CD4-positive, alpha-beta T cell (primary cell): ENCODE measurements at regions of chr2 and their contacts with region 1.

Region 1: GRCh38 chr2:73828818-73829570 is at the start of gene STAMBP:
- DNase-seq: peak; percentile 78 to 97 (median 88)
- ATAC-seq: peak; percentile 90
- H3K4me3 ChIP-seq: peak within 1 kb of the TSS; percentile 83
- H3K4me3 Mint-ChIP-seq: peak within 1 kb of the TSS; percentile 98
- H3K27ac ChIP-seq: peak within 1 kb of the TSS; percentile 90 to 97
- H3K27ac Mint-ChIP-seq: peak within 1 kb of the TSS; percentile 95
- H3K4me1 ChIP-seq: peaks cover 25% of the 10 kb centered on the region
- H3K4me1 Mint-ChIP-seq: peaks cover 60% of the 10 kb centered on the region
- H3K27me3 ChIP-seq: no peaks in the 10 kb centered on the region
- H3K27me3 Mint-ChIP-seq: no peaks in the 10 kb centered on the region
- CTCF ChIP-seq: no peak
- total RNA-seq, gene STAMBP: 11.3 to 13.8 TPM

Region 2: DNA sequence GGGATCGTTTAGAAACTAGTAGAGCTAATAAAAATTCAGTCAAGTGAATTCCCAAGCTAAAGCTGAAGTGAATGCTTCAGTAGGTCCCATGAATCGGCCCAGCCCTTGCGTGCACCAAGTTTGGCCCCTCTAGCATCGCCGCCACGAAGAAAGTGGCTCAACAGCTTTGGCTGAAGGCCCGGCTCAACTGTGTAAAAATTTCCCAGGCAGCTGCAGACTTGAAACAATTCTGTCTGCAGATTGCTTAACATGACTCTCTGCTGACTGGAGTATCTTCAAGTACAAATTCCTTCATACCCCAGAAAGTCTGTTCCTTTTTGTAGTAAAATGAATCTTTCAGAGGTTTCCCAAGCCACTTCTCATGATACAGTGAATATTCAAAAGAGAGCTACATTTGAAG is 410.7 kb before region 1 on chr2:
- CTCF ChIA-PET with region 1: no interaction called
- POLR2A ChIA-PET with region 1: no interaction called
- intact Hi-C with region 1: no loop called
- DNase-seq: no peak
- ATAC-seq: no peak
- H3K4me3 ChIP-seq: no peak overlapping the region
- H3K4me3 Mint-ChIP-seq: no peak overlapping the region
- H3K27ac ChIP-seq: no peak overlapping the region
- H3K27ac Mint-ChIP-seq: no peak overlapping the region
- H3K4me1 ChIP-seq: no peaks in the 10 kb centered on the region
- H3K4me1 Mint-ChIP-seq: peaks cover 14% of the 10 kb centered on the region
- H3K27me3 ChIP-seq: no peaks in the 10 kb centered on the region
- H3K27me3 Mint-ChIP-seq: no peaks in the 10 kb centered on the region
- CTCF ChIP-seq: no peak

Region 3: GRCh38 chr2:73468376-73468775 is 360.6 kb before region 1 on chr2:
- CTCF ChIA-PET with region 1: no interaction called
- POLR2A ChIA-PET with region 1: no interaction called
- intact Hi-C with region 1: no loop called
- DNase-seq: no peak
- ATAC-seq: no peak
- H3K4me3 ChIP-seq: no peak overlapping the region
- H3K4me3 Mint-ChIP-seq: no peak overlapping the region
- H3K27ac ChIP-seq: no peak overlapping the region
- H3K27ac Mint-ChIP-seq: no peak overlapping the region
- H3K4me1 ChIP-seq: no peaks in the 10 kb centered on the region
- H3K4me1 Mint-ChIP-seq: no peaks in the 10 kb centered on the region
- H3K27me3 ChIP-seq: no peaks in the 10 kb centered on the region
- H3K27me3 Mint-ChIP-seq: no peaks in the 10 kb centered on the region
- CTCF ChIP-seq: no peak

Region 4: DNA sequence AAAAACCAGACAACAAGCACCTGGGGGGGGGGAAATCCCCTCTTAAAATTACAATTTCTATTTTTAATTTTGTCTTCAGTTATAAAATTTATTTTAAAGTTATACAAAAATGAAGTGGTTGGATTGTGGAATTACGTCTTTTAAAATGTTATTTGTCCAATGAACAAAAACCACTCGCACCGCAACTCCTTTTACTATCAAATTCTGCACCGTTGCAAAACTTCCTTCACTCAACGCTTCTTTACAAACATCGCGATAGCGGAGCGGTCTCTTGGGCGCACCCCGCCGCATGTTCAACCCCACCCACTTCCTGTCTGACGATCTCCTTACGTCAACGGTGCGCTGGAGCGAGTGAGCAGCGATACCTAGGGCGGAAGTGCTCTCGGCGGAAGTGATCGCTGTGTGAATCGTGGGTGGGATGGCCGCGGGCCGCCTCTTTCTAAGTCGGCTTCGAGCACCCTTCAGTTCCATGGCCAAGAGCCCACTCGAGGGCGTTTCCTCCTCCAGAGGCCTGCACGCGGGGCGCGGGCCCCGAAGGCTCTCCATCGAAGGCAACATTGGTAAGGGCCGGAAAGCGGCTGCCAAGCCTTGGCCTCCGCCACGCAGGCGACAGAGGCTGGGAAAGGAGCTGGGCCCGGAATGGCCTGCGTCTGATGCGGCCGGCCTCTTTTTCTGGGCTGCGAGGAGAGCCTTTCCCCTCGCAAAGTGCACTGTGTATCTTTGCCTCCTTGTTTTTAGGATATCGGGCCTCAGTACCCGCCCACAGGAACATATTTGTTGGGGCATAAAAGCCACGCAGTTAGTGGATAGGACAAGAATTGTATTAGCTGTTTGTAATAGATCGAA is 97.7 kb after region 1 on chr2 and contains the start of gene DGUOK:
- CTCF ChIA-PET with region 1: interaction called, 3 read pairs
- POLR2A ChIA-PET with region 1: interaction called, 5 read pairs
- intact Hi-C with region 1: loop called (anchors 1 to 10 kb)
- DNase-seq: peak; percentile 90 to 100 (median 94)
- ATAC-seq: peak; percentile 97
- H3K4me3 ChIP-seq: peak within 1 kb of the TSS; percentile 78
- H3K4me3 Mint-ChIP-seq: peak within 1 kb of the TSS; percentile 83
- H3K27ac ChIP-seq: peak within 1 kb of the TSS; percentile 97
- H3K27ac Mint-ChIP-seq: peak within 1 kb of the TSS; percentile 98
- H3K4me1 ChIP-seq: peaks cover 46% of the 10 kb centered on the region
- H3K4me1 Mint-ChIP-seq: peaks cover 53% of the 10 kb centered on the region
- H3K27me3 ChIP-seq: no peaks in the 10 kb centered on the region
- H3K27me3 Mint-ChIP-seq: no peaks in the 10 kb centered on the region
- CTCF ChIP-seq: no peak
- total RNA-seq, gene DGUOK: 30.5 to 32.0 TPM

Region 5: GRCh38 chr2:74147727-74148456 is 318.9 kb after region 1 on chr2 and contains the start of gene BOLA3:
- CTCF ChIA-PET with region 1: interaction called, 16 read pairs
- POLR2A ChIA-PET with region 1: interaction called, 5 read pairs
- intact Hi-C with region 1: loop called (anchors 10 kb)
- DNase-seq: peak; percentile 60 to 89 (median 76)
- ATAC-seq: peak; percentile 87
- H3K4me3 ChIP-seq: peak within 1 kb of the TSS; percentile 62
- H3K4me3 Mint-ChIP-seq: no peak within 1 kb of the TSS
- H3K27ac ChIP-seq: peak within 1 kb of the TSS; percentile 29 to 65
- H3K27ac Mint-ChIP-seq: no peak within 1 kb of the TSS
- H3K4me1 ChIP-seq: peaks cover 23% of the 10 kb centered on the region
- H3K4me1 Mint-ChIP-seq: no peaks in the 10 kb centered on the region
- H3K27me3 ChIP-seq: no peaks in the 10 kb centered on the region
- H3K27me3 Mint-ChIP-seq: no peaks in the 10 kb centered on the region
- CTCF ChIP-seq: peak; percentile 77
- total RNA-seq, gene BOLA3: 11.4 to 12.9 TPM

Region 6: DNA sequence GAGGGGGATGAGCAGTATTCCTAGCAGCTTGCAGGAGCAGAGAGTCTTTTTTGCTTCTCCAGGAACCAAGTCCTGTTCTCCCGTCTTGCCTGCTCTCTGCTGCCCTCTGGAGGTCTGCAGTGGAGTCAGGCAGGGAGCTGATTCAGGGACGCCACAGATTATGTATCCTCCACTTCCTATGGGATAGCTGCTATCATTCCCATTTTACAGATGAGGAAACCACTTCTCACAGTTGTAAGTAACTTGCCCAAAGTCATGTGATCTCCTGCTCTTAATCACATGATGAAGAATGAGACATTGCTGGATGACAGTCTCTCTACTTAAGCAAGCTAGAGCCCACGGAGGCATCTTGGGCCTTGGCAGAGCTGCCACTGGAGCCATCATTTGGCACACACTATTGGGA is 505.9 kb after region 1 on chr2:
- CTCF ChIA-PET with region 1: interaction called, 13 read pairs
- POLR2A ChIA-PET with region 1: interaction called, 3 read pairs
- intact Hi-C with region 1: loop called in 1 of 2 experiments (anchors 1 kb)
- DNase-seq: peak; percentile 62 to 86 (median 72)
- ATAC-seq: peak; percentile 91
- H3K4me3 ChIP-seq: no peak overlapping the region
- H3K4me3 Mint-ChIP-seq: no peak overlapping the region
- H3K27ac ChIP-seq: no peak overlapping the region
- H3K27ac Mint-ChIP-seq: no peak overlapping the region
- H3K4me1 ChIP-seq: peaks cover 9% of the 10 kb centered on the region
- H3K4me1 Mint-ChIP-seq: peaks cover 12% of the 10 kb centered on the region
- H3K27me3 ChIP-seq: no peaks in the 10 kb centered on the region
- H3K27me3 Mint-ChIP-seq: no peaks in the 10 kb centered on the region
- CTCF ChIP-seq: peak; percentile 99

Region 7: DNA sequence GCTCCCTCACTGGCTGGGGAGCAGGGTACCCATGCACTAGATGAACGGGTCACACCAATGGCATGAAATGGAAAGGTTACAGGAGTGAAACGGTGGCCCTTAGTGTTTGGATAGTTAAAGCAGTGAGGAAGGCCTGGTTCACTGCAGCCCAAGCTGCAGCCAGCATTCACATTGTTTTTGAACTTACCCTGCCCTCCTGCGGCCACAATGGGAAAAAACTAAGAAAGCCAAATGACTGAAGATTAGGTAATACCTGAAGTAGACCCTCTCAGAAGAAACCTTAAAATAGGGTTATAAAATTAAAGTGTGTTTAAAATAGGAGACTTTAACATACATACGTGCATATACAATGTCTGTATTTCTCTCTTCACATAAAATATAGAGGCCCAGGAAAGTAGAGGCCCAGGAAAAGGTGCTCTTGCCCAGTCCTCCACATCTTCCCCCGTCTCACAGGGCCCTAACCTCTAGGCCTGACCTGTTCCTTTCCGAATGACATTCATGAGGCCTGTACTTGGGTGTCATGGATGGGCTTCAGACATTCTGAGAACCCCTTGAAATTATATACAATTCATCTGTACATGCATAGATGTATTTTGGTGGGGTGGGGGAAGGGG is 758.8 kb after region 1 on chr2:
- CTCF ChIA-PET with region 1: no interaction called
- POLR2A ChIA-PET with region 1: no interaction called
- intact Hi-C with region 1: loop called in 1 of 2 experiments (anchors 10 kb)
- DNase-seq: peak; percentile 34 to 81 (median 50)
- ATAC-seq: peak; percentile 84
- H3K4me3 ChIP-seq: no peak overlapping the region
- H3K4me3 Mint-ChIP-seq: no peak overlapping the region
- H3K27ac ChIP-seq: no peak overlapping the region
- H3K27ac Mint-ChIP-seq: no peak overlapping the region
- H3K4me1 ChIP-seq: peaks cover 5% of the 10 kb centered on the region
- H3K4me1 Mint-ChIP-seq: peaks cover 13% of the 10 kb centered on the region
- H3K27me3 ChIP-seq: peaks cover 0 to 7% of the 10 kb centered on the region in 2 experiments
- H3K27me3 Mint-ChIP-seq: peaks cover 16% of the 10 kb centered on the region
- CTCF ChIP-seq: peak; percentile 59